BJ (cell line): ENCODE measurements at regions of chr6 and their contacts with region 1.

Region 1: DNA sequence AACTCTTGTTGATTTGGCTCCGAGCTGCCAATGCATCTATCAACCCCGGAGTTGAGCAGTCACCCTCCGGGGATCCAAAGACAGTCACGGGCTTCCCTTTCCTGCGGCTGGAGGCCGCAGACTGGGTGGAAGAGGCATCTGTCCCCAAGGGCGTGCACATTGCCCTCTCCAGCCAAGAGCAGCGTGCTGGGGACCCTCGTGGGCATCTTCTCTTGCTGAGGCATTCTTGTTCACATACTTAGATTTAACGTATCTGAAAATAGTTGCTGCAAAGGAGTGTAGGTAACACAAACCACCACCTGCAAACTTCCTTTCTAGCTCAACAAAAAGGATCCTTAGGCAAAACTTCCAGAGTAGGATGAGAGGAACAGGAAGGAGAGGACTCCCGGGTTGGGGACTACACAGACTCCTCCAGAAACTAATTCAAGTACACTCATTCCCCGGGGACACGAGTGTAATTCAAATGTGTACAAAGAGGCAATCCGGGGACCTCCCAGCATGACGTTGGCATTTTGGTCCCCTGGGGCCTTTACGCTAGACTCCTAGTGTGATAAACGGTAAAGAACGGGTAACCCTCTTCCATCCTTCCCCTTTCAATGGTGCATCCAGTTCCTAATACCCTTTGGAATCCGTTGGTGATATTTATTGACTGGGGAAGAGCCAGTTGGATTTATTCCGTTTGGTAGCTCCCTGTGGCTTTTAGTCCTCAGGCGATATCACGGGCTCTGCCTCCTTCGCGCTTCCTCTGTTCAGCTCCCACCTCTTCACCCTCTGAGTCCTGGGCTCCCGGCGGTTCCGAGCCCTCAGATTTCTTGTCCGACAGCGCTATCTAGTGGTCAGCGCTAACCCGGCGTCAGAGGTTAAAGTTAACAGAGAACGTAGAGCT is 2.7 kb upstream of the COL12A1 start:
- DNase-seq: no peak
- H3K4me3 ChIP-seq: no peak overlapping the region
- H3K27me3 ChIP-seq: no peaks in the 10 kb centered on the region
- CTCF ChIP-seq: peak; percentile 87

Region 2: GRCh38 chr6:73675466-73676098 is 1533.0 kb before region 1 on chr6:
- CTCF ChIA-PET with region 1: interaction called, 21 read pairs
- POLR2A ChIA-PET with region 1: no interaction called
- DNase-seq: no peak
- H3K4me3 ChIP-seq: no peak overlapping the region
- H3K27me3 ChIP-seq: peaks cover 2% of the 10 kb centered on the region; the same call in 1 of the 2 replicates
- CTCF ChIP-seq: peak; percentile 87

Region 3: DNA sequence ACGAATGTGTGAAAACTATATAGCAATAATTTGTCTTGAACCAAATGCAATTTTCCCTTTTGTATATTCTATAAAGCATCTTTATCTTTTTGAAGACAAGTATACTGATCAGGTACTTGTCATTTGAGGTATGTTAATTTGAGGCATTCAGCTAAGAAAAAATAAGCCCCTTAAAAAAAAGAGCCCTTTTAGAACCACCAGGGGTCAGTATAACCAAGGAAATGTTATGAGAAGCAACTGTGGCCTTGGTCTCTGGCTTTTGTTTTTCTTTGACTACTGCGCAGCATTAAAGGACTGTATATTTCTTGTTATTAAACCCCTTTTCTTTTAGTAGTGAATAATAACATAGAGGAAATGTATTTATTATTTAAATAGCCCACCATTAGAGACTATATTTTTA is 1469.4 kb before region 1 on chr6:
- CTCF ChIA-PET with region 1: interaction called, 89 read pairs
- POLR2A ChIA-PET with region 1: interaction called, 3 read pairs
- DNase-seq: no peak
- H3K4me3 ChIP-seq: no peak overlapping the region
- H3K27me3 ChIP-seq: no peaks in the 10 kb centered on the region
- CTCF ChIP-seq: peak; percentile 67

Region 4: DNA sequence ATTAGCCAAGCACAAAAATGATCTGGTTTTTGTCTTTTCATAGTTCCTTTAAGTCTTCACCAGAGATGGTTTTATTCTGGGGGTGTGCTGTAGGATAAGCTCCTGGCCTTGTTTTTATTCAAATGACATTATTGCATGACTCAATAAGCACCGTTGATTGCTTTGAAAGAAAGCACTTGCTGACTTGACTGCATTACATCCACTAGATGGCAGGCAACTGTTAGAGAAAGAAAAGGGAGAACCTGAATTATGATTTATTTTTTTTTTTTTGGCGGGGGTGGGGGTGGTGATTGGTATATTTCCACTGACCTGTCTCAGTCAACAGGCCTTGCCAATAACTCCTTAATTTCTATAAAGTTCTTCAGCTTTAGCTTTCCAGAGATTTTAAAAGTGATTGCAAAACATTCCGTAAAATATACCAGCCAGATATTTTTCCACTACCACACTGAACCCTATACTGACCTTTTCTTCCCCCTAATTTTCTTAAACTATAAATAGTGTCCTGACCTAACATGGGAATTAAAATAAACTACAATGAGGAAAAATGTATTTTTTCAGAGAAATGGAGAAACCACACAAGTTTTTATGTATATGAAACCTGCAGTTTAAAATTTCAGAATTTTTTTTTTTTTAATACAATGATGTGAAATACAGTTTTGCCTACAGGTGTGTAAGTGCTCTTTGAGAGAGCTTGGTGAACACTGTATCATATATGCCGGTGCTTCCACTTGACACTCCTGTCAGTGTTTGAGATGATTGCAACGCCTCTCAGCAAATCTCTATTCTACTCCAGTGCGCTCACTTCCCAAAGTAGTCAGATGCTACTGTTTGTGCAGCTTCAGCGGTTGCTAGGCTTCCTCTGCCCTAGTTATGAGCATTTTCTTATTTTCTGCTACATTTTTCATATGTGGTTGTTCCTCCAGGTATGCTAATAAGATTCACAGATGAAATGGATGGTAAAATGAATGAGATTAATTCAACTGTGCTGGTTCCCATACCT is 1238.3 kb before region 1 on chr6:
- CTCF ChIA-PET with region 1: interaction called, 30 read pairs
- POLR2A ChIA-PET with region 1: no interaction called
- DNase-seq: peak; percentile 30
- H3K4me3 ChIP-seq: no peak overlapping the region
- H3K27me3 ChIP-seq: no peaks in the 10 kb centered on the region
- CTCF ChIP-seq: peak; percentile 75

Region 5: GRCh38 chr6:74091136-74091793 is 1117.3 kb before region 1 on chr6:
- CTCF ChIA-PET with region 1: interaction called, 58 read pairs
- POLR2A ChIA-PET with region 1: no interaction called
- DNase-seq: no peak
- H3K4me3 ChIP-seq: no peak overlapping the region
- H3K27me3 ChIP-seq: no peaks in the 10 kb centered on the region
- CTCF ChIP-seq: peak; percentile 62

Region 6: GRCh38 chr6:74409447-74409846 is 799.1 kb before region 1 on chr6:
- CTCF ChIA-PET with region 1: interaction called, 130 read pairs
- POLR2A ChIA-PET with region 1: no interaction called
- DNase-seq: peak; percentile 37
- H3K4me3 ChIP-seq: no peak overlapping the region
- H3K27me3 ChIP-seq: no peaks in the 10 kb centered on the region
- CTCF ChIP-seq: peak; percentile 56

Region 7: GRCh38 chr6:75230484-75231325 is 22.2 kb after region 1 on chr6:
- CTCF ChIA-PET with region 1: interaction called, 10 read pairs
- POLR2A ChIA-PET with region 1: no interaction called
- DNase-seq: no peak
- H3K4me3 ChIP-seq: no peak overlapping the region
- H3K27me3 ChIP-seq: no peaks in the 10 kb centered on the region
- CTCF ChIP-seq: peak; percentile 84